Astrocyte of the cerebellum (primary cell): ENCODE measurements at regions of chr9 and their contacts with region 1.

Region 1: GRCh38 chr9:33125871-33126822 is 41.0 kb downstream of the B4GALT1 start:
- DNase-seq: no peak
- H3K4me3 ChIP-seq: no peak overlapping the region
- CTCF ChIP-seq: no peak

Region 2: GRCh38 chr9:33192493-33193255 is 66.5 kb after region 1 on chr9:
- in situ Hi-C with region 1: loop called (anchors 5 kb)
- DNase-seq: no peak
- H3K4me3 ChIP-seq: no peak overlapping the region
- CTCF ChIP-seq: no peak

Region 3: DNA sequence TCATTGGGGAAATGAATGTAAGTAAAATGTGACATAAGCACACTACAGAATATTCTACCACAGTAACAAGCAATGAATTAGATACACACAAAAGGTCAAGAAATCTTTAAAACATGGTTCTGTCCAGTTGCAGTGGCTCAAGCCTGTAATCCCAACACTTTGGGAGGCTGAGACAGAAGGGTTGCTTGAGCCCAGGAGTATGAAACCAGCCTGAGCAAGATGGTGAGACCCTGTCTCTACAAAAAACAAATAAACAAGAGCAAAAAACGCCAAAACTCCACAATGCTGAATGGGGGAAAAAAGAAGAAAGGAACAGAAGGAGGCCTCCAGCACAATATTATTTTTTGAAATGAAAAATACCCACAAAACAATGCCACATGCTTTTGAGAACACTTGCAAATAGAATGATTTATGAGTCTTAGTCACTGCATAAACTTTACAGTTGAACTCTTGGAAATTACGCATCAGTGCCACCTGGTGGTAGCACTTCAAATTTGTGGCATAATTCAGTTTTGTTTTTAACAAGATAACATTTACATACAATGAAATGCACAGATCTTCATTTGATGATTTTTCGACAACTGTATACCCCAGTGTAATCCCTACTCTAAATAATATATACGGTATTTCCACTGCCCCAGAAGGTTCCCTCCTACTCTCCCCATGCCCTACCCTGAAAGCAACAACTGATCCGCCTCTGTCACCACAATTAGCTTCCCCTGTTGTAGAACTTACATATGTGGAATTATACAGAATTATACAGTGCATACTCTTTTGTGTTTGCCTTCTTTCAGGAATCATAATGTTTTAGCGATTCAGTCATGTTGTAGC is 99.4 kb after region 1 on chr9:
- in situ Hi-C with region 1: loop called (anchors 10 kb)
- DNase-seq: peak; percentile 71
- H3K4me3 ChIP-seq: no peak overlapping the region
- CTCF ChIP-seq: peak; percentile 49